Activated T-helper 1 cell treated with anti-CD3 and anti-CD28 coated beads, Interleukin-12 subunit alpha, Interleukin-12 subunit beta, Interleukin-2, Interleukin-4 antibody, amounts not matched to agents 30 ng/mL and 10 ng/mL and 1 ng/mL, durations not matched to agents 14 hours and 24 hours and 36 hours (primary cell): ENCODE measurements at regions of chr7 and their contacts with region 1.

Region 1: GRCh38 chr7:17680943-17681351 is 259.3 kb downstream of the SNX13 start:
- DNase-seq: no peak
- H3K4me3 Mint-ChIP-seq: no peak overlapping the region
- H3K27ac Mint-ChIP-seq: no peak overlapping the region
- H3K4me1 Mint-ChIP-seq: no peaks in the 10 kb centered on the region
- H3K27me3 Mint-ChIP-seq: peaks cover 3% of the 10 kb centered on the region

Region 2: DNA sequence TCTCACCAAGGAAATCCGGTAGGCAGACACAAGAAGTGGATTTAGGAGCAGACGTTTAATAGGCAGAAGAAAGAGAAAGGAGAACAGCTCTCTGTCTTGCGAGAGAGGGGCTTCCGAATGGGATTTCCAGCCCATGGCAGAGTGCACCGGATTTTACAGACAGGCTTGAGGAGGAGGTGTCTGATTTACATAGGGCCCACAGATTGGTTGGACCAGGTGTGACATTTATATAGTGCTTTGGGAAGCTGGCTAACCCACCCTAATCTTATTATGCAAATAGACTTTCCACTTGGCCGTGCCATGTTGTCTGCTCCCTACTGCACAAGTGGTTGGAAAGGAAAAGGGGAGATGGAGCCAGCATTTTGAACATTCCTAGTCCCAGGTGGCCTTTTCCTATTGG is 1093.2 kb before region 1 on chr7:
- intact Hi-C with region 1: no loop called
- DNase-seq: no peak
- H3K4me3 Mint-ChIP-seq: no peak overlapping the region
- H3K27ac Mint-ChIP-seq: no peak overlapping the region
- H3K4me1 Mint-ChIP-seq: no peaks in the 10 kb centered on the region
- H3K27me3 Mint-ChIP-seq: peaks cover 2% of the 10 kb centered on the region

Region 3: GRCh38 chr7:16982640-16983350 is 698.2 kb before region 1 on chr7:
- intact Hi-C with region 1: loop called (anchors 1 kb)
- DNase-seq: no peak
- H3K4me3 Mint-ChIP-seq: no peak overlapping the region
- H3K27ac Mint-ChIP-seq: no peak overlapping the region
- H3K4me1 Mint-ChIP-seq: peaks cover 7% of the 10 kb centered on the region
- H3K27me3 Mint-ChIP-seq: peaks cover 18% of the 10 kb centered on the region

Region 4: GRCh38 chr7:17661982-17662585 is 18.9 kb before region 1 on chr7:
- intact Hi-C with region 1: no loop called
- DNase-seq: no peak
- H3K4me3 Mint-ChIP-seq: no peak overlapping the region
- H3K27ac Mint-ChIP-seq: no peak overlapping the region
- H3K4me1 Mint-ChIP-seq: no peaks in the 10 kb centered on the region
- H3K27me3 Mint-ChIP-seq: peaks cover 2% of the 10 kb centered on the region

Region 5: DNA sequence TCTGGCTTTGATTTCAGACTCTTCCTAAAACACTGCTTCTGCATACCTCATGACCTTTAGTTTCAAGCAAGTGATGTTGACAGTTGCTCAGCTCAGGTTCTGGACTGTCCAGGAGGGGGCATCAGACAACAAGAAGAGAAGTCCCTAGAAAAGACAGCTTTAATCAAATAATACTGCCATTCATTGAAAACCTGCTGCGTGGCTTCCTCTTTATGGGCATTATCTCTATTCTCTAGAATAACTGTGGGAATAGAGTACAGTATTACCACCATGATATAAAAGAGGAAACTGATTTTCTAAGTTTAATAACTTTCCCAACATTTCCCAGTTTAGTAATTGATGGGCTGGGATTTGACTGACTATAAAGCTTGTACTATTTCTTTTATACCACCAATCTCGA is 89.0 kb after region 1 on chr7:
- intact Hi-C with region 1: loop called (anchors 1 kb)
- DNase-seq: peak; percentile 23
- H3K4me3 Mint-ChIP-seq: no peak overlapping the region
- H3K27ac Mint-ChIP-seq: no peak overlapping the region
- H3K4me1 Mint-ChIP-seq: peaks cover 7% of the 10 kb centered on the region
- H3K27me3 Mint-ChIP-seq: peaks cover 4% of the 10 kb centered on the region

Region 6: DNA sequence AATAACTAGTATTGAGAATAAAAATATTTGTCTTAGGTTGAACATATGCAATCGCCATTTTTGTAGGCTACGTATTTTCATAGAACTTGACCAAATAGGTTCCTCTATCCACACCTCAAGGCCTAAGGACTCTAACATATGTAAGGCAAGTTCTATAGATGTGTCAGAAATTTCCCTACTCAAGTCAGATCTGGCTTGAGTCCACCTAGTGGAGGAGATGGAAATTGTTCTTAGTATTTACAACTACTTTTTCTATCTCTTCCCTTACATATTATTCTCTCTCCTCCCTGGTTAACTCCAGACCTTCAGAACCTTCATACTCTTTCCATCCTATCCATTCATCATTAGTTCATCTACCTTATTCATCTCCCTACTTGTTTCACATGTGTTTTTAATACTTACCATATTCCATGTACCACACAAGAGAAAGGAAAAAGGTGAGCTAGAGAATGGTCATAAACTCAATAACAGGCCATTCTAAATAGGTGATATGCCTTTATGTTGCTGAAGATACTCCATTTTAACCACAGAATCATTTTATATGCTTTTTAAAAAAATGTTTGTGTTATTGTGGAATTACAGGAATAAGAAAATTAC is 640.1 kb after region 1 on chr7:
- intact Hi-C with region 1: loop called (anchors 1 kb)
- DNase-seq: no peak
- H3K4me3 Mint-ChIP-seq: no peak overlapping the region
- H3K27ac Mint-ChIP-seq: no peak overlapping the region
- H3K4me1 Mint-ChIP-seq: no peaks in the 10 kb centered on the region
- H3K27me3 Mint-ChIP-seq: peaks cover 3% of the 10 kb centered on the region

Region 7: DNA sequence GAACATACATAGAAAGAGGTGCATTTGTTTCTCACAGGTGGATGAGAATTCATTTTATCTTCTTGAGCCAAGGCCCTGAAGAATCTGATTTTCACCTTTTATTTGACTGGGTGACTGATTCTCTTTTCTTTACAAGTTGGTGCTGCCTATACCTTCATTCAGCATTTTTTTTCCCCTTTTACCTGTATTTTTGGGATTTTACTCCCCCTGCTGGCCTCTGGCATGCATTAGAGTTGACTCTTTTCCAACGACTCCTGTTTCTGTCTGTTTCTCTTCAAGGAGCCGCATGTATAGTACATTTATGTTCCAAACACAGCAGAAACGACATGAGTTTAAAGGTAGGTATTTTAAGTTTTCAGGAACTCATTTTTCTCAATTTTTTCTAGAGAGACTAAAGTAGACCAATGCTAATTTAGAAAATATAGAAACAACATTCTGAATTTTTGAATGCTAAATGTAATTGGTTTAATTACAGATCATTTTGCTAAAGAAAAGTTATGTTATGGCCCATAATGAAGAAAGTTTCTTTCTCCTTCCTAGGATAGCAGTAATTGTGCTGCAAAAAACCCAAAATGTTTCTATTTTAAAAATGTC is 664.8 kb after region 1 on chr7:
- intact Hi-C with region 1: loop called (anchors 1 kb)
- DNase-seq: no peak
- H3K4me3 Mint-ChIP-seq: no peak overlapping the region
- H3K27ac Mint-ChIP-seq: no peak overlapping the region
- H3K4me1 Mint-ChIP-seq: no peaks in the 10 kb centered on the region
- H3K27me3 Mint-ChIP-seq: peaks cover 4% of the 10 kb centered on the region

Region 8: DNA sequence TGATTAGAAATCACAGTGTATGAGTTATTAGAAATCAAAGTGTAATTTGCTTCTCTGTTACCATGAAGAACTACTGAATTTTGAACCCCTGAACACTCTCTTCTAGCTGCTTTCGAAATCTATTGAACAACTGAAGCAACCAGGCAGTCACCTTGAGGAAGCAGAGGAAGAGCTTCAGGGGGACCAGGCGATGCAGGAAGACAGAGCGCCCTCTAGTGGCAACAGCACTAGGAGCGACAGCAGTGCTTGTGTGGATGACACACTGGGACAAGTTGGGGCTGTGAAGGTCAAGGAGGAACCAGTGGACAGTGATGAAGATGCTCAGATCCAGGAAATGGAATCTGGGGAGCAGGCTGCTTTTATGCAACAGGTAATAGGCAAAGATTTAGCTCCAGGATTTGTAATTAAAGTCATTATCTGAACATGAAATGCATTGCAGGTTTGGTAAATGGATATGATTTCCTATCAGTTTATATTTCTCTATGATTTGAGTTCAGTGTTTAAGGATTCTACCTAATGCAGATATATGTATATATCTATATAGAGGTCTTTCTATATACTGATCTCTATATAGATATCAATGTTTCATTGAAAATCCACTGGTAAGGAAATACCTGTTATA is 985.3 kb after region 1 on chr7:
- intact Hi-C with region 1: loop called (anchors 2 kb)
- DNase-seq: peak; percentile 46
- H3K4me3 Mint-ChIP-seq: no peak overlapping the region
- H3K27ac Mint-ChIP-seq: no peak overlapping the region
- H3K4me1 Mint-ChIP-seq: peaks cover 7% of the 10 kb centered on the region
- H3K27me3 Mint-ChIP-seq: no peaks in the 10 kb centered on the region

Region 9: GRCh38 chr7:19051767-19052375 is 1370.9 kb after region 1 on chr7:
- intact Hi-C with region 1: loop called (anchors 2 kb)
- DNase-seq: no peak
- H3K4me3 Mint-ChIP-seq: no peak overlapping the region
- H3K27ac Mint-ChIP-seq: no peak overlapping the region
- H3K4me1 Mint-ChIP-seq: no peaks in the 10 kb centered on the region
- H3K27me3 Mint-ChIP-seq: no peaks in the 10 kb centered on the region